ENCODE measurements at regions of chr13 and their contacts with region 1.

Region 1: GRCh38 chr13:73200406-73200805 is 141.6 kb downstream of the KLF5 start:
- DNase-seq: peak; percentile 74
- H3K4me3 Mint-ChIP-seq: no peak overlapping the region
- H3K27ac Mint-ChIP-seq: peak overlapping the region; percentile 89
- H3K4me1 Mint-ChIP-seq: peaks cover 17% of the 10 kb centered on the region
- H3K27me3 Mint-ChIP-seq: no peaks in the 10 kb centered on the region
- CTCF ChIP-seq: no peak

Region 2: GRCh38 chr13:72536714-72537394 is 663.6 kb before region 1 on chr13:
- CTCF ChIA-PET with region 1: no interaction called
- POLR2A ChIA-PET with region 1: no interaction called
- intact Hi-C with region 1: no loop called
- DNase-seq: no peak
- H3K4me3 Mint-ChIP-seq: no peak overlapping the region
- H3K27ac Mint-ChIP-seq: no peak overlapping the region
- H3K4me1 Mint-ChIP-seq: no peaks in the 10 kb centered on the region
- H3K27me3 Mint-ChIP-seq: peaks cover 1% of the 10 kb centered on the region
- CTCF ChIP-seq: no peak

Region 3: DNA sequence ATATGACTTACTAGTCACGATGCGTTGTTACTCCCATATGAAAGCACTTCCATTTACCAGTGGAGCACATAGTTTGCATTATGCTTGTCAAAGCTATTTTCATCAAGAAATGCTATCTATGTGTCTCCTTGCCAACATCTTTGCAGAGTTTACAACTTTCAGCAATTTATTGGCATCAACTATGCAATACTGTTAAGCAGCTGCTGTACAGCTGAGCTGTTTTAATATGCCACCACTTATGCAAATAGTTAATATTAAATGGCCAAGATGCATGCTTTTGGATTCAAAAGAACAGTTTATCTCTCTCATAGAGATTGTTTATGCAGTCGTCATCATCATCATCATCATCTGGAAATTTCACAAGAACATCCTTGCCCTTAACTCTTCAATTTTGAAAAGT is 209.5 kb before region 1 on chr13:
- CTCF ChIA-PET with region 1: no interaction called
- POLR2A ChIA-PET with region 1: no interaction called
- intact Hi-C with region 1: no loop called
- DNase-seq: no peak
- H3K4me3 Mint-ChIP-seq: no peak overlapping the region
- H3K27ac Mint-ChIP-seq: no peak overlapping the region
- H3K4me1 Mint-ChIP-seq: no peaks in the 10 kb centered on the region
- H3K27me3 Mint-ChIP-seq: no peaks in the 10 kb centered on the region
- CTCF ChIP-seq: no peak

Region 4: DNA sequence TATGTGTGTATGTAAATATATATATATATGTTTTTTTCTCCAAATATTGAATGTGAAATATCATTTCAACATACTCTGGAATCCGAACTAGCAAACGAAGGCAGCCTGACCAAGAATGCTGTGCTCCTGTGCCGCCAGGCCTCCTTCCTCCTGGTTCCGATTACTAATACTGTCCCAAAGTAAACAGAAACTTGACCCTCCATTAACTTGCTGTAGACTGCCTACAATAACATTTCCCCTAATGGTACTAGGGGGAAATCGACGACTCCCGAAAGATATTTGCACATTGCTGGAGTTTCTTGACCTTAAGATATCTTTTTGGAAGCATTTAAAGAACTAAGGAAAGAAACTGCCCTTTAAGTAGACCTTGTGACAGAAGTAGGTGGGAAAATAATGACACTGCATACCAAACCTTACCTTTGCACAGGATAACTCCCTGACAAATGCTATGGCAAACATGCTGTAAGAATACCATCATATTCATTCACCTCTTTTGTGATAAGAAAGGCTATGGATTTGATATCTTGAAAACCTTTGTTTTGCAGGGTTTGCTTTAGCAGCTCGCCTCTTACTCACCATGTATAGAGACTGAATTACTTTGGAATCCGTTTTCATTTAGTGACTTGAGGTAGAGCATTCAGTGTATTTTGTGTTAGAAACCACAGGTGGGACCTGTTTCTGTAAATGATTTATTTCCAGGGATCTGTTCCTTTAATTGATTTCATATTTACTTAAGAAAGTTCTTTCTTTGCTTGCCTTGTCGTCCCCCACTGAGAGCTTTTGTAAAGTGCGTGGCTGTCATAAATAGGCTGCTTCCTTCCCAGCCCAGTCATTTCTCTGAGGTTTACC is 61.5 kb before region 1 on chr13:
- CTCF ChIA-PET with region 1: no interaction called
- POLR2A ChIA-PET with region 1: no interaction called
- intact Hi-C with region 1: loop called (anchors 10 kb)
- DNase-seq: peak; percentile 39
- H3K4me3 Mint-ChIP-seq: no peak overlapping the region
- H3K27ac Mint-ChIP-seq: peak overlapping the region; percentile 44
- H3K4me1 Mint-ChIP-seq: peaks cover 10% of the 10 kb centered on the region
- H3K27me3 Mint-ChIP-seq: no peaks in the 10 kb centered on the region
- CTCF ChIP-seq: no peak